ENCODE measurements at regions of chr7 and their contacts with region 1.

Region 1: DNA sequence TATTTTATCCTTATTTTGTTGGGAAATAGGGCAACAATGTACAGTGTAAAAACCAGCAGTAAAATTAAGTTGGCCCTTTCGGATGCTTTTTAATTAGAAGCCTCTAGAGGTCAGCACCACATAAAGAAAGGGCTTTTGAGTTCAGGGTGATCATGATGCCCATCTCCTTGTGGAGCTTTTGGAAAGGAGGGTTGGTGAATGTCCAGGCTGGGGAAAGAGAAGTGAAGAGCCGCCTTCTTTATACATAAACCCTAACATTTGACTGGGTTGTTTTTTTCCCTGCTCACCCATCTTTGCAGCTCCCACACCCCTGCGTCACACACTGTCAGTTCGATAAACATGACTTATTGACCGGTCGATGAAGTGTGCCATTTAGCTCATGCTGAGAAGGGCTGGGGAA is 29.8 kb downstream of the MTURN start:
- DNase-seq: peak in 1 of 2 experiments; percentile 46
- H3K4me3 ChIP-seq: no peak overlapping the region
- H3K4me3 Mint-ChIP-seq: no peak overlapping the region
- H3K27ac Mint-ChIP-seq: no peak overlapping the region
- H3K4me1 ChIP-seq: peaks cover 15% of the 10 kb centered on the region; the same call in 1 of the 2 replicates
- H3K4me1 Mint-ChIP-seq: no peaks in the 10 kb centered on the region
- H3K27me3 ChIP-seq: no peaks in the 10 kb centered on the region
- H3K27me3 Mint-ChIP-seq: peaks cover 13% of the 10 kb centered on the region
- CTCF ChIP-seq: peak; percentile 25 to 59

Region 2: DNA sequence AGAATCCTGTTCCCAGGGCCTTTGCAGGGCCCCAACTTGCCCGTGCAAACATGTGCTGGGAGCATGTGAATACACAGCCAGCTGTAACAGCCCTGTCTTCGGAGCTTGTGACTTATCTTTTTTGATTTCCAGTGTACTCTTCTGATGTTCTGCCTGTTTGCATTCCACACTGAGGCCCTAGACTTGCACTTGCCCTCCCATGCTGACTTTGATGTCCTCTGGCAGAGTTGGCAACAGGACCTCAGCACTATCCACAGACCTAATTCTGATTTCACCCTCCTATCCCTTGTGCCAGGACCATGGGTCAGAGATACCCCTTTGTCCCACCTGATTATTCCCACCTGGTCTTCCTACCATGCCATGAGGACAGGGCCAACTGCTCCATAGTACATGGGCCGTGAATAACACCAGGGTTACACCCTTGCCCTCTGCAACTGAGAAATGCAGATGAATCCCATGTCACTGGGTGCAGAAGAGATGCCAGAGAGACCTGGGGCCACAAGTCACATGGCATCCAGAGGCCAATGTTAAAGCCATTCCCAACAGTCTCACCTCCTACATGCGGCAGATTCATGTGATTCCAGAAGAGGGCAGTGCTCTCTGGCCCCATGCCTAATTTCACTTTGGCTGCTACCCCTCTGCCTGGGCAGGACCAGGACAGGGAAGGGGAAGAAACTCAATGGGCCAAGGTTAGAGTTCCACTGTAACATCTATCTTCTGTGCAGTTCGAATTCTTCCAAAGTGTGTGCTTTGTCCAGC is 218.0 kb before region 1 on chr7:
- CTCF ChIA-PET with region 1: no interaction called
- POLR2A ChIA-PET with region 1: no interaction called
- intact Hi-C with region 1: no loop called
- DNase-seq: peak in 1 of 2 experiments; percentile 22
- H3K4me3 ChIP-seq: no peak overlapping the region
- H3K4me3 Mint-ChIP-seq: no peak overlapping the region
- H3K27ac Mint-ChIP-seq: no peak overlapping the region
- H3K4me1 ChIP-seq: no peaks in the 10 kb centered on the region
- H3K4me1 Mint-ChIP-seq: no peaks in the 10 kb centered on the region
- H3K27me3 ChIP-seq: no peaks in the 10 kb centered on the region
- H3K27me3 Mint-ChIP-seq: no peaks in the 10 kb centered on the region
- CTCF ChIP-seq: peak; percentile 23 to 44

Region 3: GRCh38 chr7:30225863-30226613 is 61.5 kb after region 1 on chr7:
- CTCF ChIA-PET with region 1: interaction called, 4 read pairs
- POLR2A ChIA-PET with region 1: no interaction called
- intact Hi-C with region 1: loop called (anchors 2 kb)
- DNase-seq: no peak
- H3K4me3 ChIP-seq: no peak overlapping the region
- H3K4me3 Mint-ChIP-seq: no peak overlapping the region
- H3K27ac Mint-ChIP-seq: no peak overlapping the region
- H3K4me1 ChIP-seq: 0 out of 2 replicates have a peak, but pooled peaks cover 5% of the 10 kb centered on the region
- H3K4me1 Mint-ChIP-seq: peaks cover 15% of the 10 kb centered on the region
- H3K27me3 ChIP-seq: no peaks in the 10 kb centered on the region; the same call in 1 of the 2 replicates
- H3K27me3 Mint-ChIP-seq: peaks cover 3% of the 10 kb centered on the region
- CTCF ChIP-seq: no peak

Region 4: DNA sequence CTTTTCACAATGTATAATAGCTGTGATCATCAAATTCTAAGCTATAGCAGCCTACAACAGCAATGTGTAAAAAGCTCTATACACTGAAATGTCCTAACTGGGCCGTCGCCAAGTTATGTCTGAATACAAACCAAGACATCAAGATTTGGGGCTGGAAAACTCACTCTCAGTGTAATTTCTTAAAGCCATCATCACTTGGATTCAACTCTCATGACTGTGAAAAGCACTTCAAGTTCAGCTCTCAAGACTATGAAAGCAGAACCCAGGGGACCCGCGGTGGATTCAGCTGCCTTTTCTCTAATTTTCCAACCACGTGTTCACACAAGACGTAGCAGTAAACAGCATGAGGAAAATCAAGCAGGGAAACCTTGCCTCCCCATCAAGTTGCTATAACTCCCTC is 104.0 kb after region 1 on chr7:
- CTCF ChIA-PET with region 1: no interaction called
- POLR2A ChIA-PET with region 1: no interaction called
- intact Hi-C with region 1: no loop called
- DNase-seq: no peak
- H3K4me3 ChIP-seq: no peak overlapping the region
- H3K4me3 Mint-ChIP-seq: no peak overlapping the region
- H3K27ac Mint-ChIP-seq: no peak overlapping the region
- H3K4me1 ChIP-seq: peaks cover 1% of the 10 kb centered on the region
- H3K4me1 Mint-ChIP-seq: no peaks in the 10 kb centered on the region
- H3K27me3 ChIP-seq: no peaks in the 10 kb centered on the region
- H3K27me3 Mint-ChIP-seq: no peaks in the 10 kb centered on the region
- CTCF ChIP-seq: no peak